ENCODE measurements at regions of chr3 and their contacts with region 1.

Region 1: GRCh38 chr3:112519424-112520001 is 20.2 kb upstream of the BTLA start:
- DNase-seq: peak; percentile 68
- ATAC-seq: peak; percentile 80
- H3K4me3 Mint-ChIP-seq: no peak overlapping the region
- H3K27ac Mint-ChIP-seq: no peak overlapping the region
- H3K4me1 Mint-ChIP-seq: peaks cover 18% of the 10 kb centered on the region
- H3K27me3 Mint-ChIP-seq: no peaks in the 10 kb centered on the region

Region 2: DNA sequence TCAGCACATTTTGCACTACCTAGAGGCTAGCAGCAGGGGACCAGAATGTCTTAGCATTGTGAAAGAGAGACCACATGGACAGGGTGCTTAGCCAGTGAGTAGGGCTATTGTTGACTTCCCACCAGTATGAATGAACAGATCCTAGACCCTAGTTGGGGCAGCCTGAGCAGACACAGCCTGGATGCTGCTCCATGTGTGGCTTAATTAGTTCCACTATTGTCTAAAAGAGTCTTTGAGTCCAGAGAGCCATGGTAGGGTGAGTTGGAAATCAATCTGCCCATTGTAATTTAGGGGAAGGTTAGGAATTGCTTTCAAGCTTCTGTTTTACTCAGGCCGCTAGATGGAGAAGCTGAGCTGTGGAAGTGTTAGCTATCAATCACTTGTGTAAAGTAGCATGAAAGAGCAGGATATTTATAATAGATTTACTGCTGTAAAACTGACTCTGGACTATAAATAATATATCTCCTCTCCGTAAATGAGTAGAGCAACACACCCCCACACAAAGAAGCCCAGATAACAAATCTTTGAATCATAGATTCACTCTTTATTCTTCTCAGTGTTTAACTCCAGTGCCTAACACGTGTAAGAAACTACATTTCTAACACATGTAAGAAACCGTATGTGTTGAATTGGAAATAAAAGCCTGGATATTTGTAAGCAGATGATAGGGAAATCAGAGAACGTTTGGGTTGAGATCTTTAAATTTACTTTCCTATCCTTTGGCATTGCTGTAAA is 382.4 kb before region 1 on chr3:
- CTCF ChIA-PET with region 1: interaction called, 11 read pairs
- POLR2A ChIA-PET with region 1: no interaction called
- DNase-seq: peak; percentile 67
- ATAC-seq: no peak
- H3K4me3 Mint-ChIP-seq: no peak overlapping the region
- H3K27ac Mint-ChIP-seq: no peak overlapping the region
- H3K4me1 Mint-ChIP-seq: peaks cover 36% of the 10 kb centered on the region
- H3K27me3 Mint-ChIP-seq: no peaks in the 10 kb centered on the region

Region 3: DNA sequence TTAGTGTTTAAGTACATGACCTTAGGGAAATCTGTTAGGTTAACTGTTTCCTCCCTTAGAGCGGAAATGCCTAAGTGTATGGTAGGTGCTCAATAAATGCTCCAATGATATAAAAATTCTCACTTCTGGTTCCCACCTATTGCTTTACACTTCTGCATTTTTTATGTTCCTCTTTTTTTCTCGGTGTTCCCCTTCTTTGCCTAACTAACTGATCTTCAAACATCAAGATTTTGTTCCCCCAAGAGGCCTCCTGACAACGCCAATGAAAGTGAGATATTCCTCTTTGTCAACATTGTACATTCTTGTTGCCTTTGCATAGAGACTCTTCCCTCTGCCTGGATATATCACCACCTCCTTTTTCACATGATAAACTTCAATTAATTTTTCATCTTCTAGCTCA is 59.7 kb after region 1 on chr3:
- CTCF ChIA-PET with region 1: no interaction called
- POLR2A ChIA-PET with region 1: no interaction called
- DNase-seq: no peak
- ATAC-seq: no peak
- H3K4me3 Mint-ChIP-seq: no peak overlapping the region
- H3K27ac Mint-ChIP-seq: no peak overlapping the region
- H3K4me1 Mint-ChIP-seq: no peaks in the 10 kb centered on the region
- H3K27me3 Mint-ChIP-seq: no peaks in the 10 kb centered on the region